GM12878 (cell line): ENCODE measurements at regions of chr1 and their contacts with region 1.

Region 1: GRCh38 chr1:46223472-46223943 is 20.4 kb downstream of the LURAP1 start:
- DNase-seq: no peak
- ATAC-seq: peak; percentile 99
- H3K4me3 ChIP-seq: no peak overlapping the region
- H3K27ac ChIP-seq: no peak overlapping the region
- H3K4me1 ChIP-seq: no peaks in the 10 kb centered on the region
- H3K27me3 ChIP-seq: no peaks in the 10 kb centered on the region
- CTCF ChIP-seq: peak; percentile 82 to 99 (median 89)
- EP300 ChIP-seq: no peak
- POLR2A ChIP-seq: no peak
- RAD21 ChIP-seq: peak; percentile 85

Region 2: DNA sequence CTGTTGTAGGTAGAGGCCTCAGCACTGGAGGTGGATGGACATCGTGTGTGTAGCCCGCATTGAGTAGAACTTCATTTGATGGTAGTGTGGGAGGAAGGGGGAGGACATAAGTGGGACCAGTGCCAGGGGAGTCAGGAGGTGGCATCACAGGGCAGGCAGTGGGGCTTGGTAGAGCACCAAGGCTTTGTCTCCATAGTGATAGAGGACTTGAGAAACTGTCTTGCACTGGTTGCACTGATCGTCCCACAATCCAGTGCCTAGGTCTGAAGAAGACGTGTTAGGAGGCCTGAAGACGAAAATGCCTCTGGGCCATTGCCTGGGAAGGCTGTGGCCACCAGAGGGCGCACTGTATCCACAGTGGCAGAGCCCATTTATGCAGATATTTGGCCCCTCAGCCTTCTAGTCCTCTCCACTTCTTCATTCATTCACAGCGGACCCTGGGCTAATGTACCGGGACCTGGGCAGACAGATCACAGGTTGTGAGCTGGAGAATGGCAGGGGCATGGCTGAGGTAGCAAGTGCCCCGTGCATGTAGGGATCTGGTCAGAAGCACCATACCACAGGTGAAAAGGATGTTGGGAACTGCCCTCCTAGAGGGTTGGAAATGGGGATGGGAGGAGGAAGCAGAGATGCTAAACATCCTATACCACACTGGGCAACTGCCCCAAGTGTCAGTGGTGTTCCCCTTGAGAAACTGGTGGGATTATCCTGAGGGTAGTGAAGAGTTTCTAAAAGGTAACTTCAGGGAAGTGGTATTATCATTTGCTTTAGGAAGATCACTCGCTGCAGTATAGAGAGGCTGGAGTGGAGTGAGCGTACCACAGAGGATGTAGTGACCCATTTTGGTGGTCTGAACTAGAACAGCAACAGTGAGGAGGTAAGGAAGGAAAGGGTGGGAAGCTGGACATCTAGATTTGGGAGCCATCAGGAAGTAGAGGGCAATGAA is 186.3 kb before region 1 on chr1:
- CTCF ChIA-PET with region 1: interaction called, 123 read pairs
- POLR2A ChIA-PET with region 1: interaction called, 3 read pairs
- RAD21 ChIA-PET with region 1: interaction called, 33 read pairs
- SMC1A ChIA-PET with region 1: interaction called, 28 read pairs
- in situ Hi-C with region 1: loop called (anchors 5 kb)
- intact Hi-C with region 1: loop called (anchors 1 kb)
- DNase-seq: peak; percentile 53
- ATAC-seq: peak; percentile 91
- H3K4me3 ChIP-seq: no peak overlapping the region
- H3K27ac ChIP-seq: no peak overlapping the region
- H3K4me1 ChIP-seq: peaks cover 13% of the 10 kb centered on the region
- H3K27me3 ChIP-seq: no peaks in the 10 kb centered on the region
- CTCF ChIP-seq: peak; percentile 97 to 98 (median 98); a peak in 5 of 6 replicates
- EP300 ChIP-seq: no peak
- POLR2A ChIP-seq: peak; percentile 30; the same call in 1 of the 2 replicates
- RAD21 ChIP-seq: peak; percentile 100

Region 3: GRCh38 chr1:46173361-46173856 is 50.1 kb before region 1 on chr1:
- CTCF ChIA-PET with region 1: interaction called, 108 read pairs
- POLR2A ChIA-PET with region 1: no interaction called
- RAD21 ChIA-PET with region 1: interaction called, 12 read pairs
- SMC1A ChIA-PET with region 1: interaction called, 14 read pairs
- in situ Hi-C with region 1: loop called (anchors 5 kb)
- intact Hi-C with region 1: no loop called
- DNase-seq: no peak
- ATAC-seq: peak; percentile 51
- H3K4me3 ChIP-seq: no peak overlapping the region
- H3K27ac ChIP-seq: no peak overlapping the region
- H3K4me1 ChIP-seq: peaks cover 3% of the 10 kb centered on the region
- H3K27me3 ChIP-seq: no peaks in the 10 kb centered on the region; a peak in 1 of 4 replicates
- CTCF ChIP-seq: peak in 1 of 3 experiments; percentile 18; a peak in 1 of 6 replicates
- EP300 ChIP-seq: no peak
- POLR2A ChIP-seq: no peak
- RAD21 ChIP-seq: no peak

Region 4: GRCh38 chr1:46197964-46198811 is 25.3 kb before region 1 on chr1 and contains the start of gene POMGNT1:
- CTCF ChIA-PET with region 1: interaction called, 15 read pairs
- POLR2A ChIA-PET with region 1: interaction called, 9 read pairs
- RAD21 ChIA-PET with region 1: interaction called, 5 read pairs
- SMC1A ChIA-PET with region 1: interaction called, 11 read pairs
- in situ Hi-C with region 1: no loop called
- intact Hi-C with region 1: no loop called
- DNase-seq: no peak
- ATAC-seq: peak; percentile 94
- H3K4me3 ChIP-seq: peak within 1 kb of the TSS; percentile 98
- H3K27ac ChIP-seq: peak within 1 kb of the TSS; percentile 59
- H3K4me1 ChIP-seq: peaks cover 9% of the 10 kb centered on the region
- H3K27me3 ChIP-seq: no peaks in the 10 kb centered on the region
- CTCF ChIP-seq: peak in 2 of 3 experiments; percentile 20 to 21; a peak in 2 of 6 replicates
- EP300 ChIP-seq: no peak
- POLR2A ChIP-seq: peak; percentile 93
- RAD21 ChIP-seq: peak; percentile 28; the same call in 1 of the 2 replicates
- polyA plus RNA-seq, gene POMGNT1: 8.6 to 29.0 TPM

Region 5: GRCh38 chr1:46236882-46237281 is 13.4 kb after region 1 on chr1:
- CTCF ChIA-PET with region 1: interaction called, 22 read pairs
- POLR2A ChIA-PET with region 1: no interaction called
- RAD21 ChIA-PET with region 1: interaction called, 7 read pairs
- SMC1A ChIA-PET with region 1: interaction called, 10 read pairs
- in situ Hi-C with region 1: no loop called
- intact Hi-C with region 1: no loop called
- DNase-seq: no peak
- ATAC-seq: no peak
- H3K4me3 ChIP-seq: no peak overlapping the region
- H3K27ac ChIP-seq: no peak overlapping the region
- H3K4me1 ChIP-seq: no peaks in the 10 kb centered on the region
- H3K27me3 ChIP-seq: no peaks in the 10 kb centered on the region
- CTCF ChIP-seq: no peak
- EP300 ChIP-seq: no peak
- POLR2A ChIP-seq: no peak
- RAD21 ChIP-seq: no peak

Region 6: GRCh38 chr1:46340404-46341221 is 117.1 kb after region 1 on chr1 and contains the start of gene NSUN4:
- CTCF ChIA-PET with region 1: interaction called, 16 read pairs
- POLR2A ChIA-PET with region 1: no interaction called
- RAD21 ChIA-PET with region 1: no interaction called
- SMC1A ChIA-PET with region 1: interaction called, 6 read pairs
- in situ Hi-C with region 1: no loop called
- intact Hi-C with region 1: no loop called
- DNase-seq: peak; percentile 69
- ATAC-seq: peak; percentile 85
- H3K4me3 ChIP-seq: peak within 1 kb of the TSS; percentile 80
- H3K27ac ChIP-seq: peak within 1 kb of the TSS; percentile 97
- H3K4me1 ChIP-seq: peaks cover 16% of the 10 kb centered on the region; the same call in 1 of the 2 replicates
- H3K27me3 ChIP-seq: no peaks in the 10 kb centered on the region
- CTCF ChIP-seq: peak; percentile 64 to 87 (median 70)
- EP300 ChIP-seq: no peak; a peak in 1 of 4 replicates
- POLR2A ChIP-seq: peak; percentile 90
- RAD21 ChIP-seq: peak; percentile 20; the same call in 1 of the 2 replicates
- polyA plus RNA-seq, gene NSUN4: 22.1 to 26.6 TPM